ENCODE measurements at regions of chr5 and their contacts with region 1.

Region 1: GRCh38 chr5:137660349-137660817 is 75.5 kb downstream of the KLHL3 start:
- DNase-seq: peak; percentile 85
- H3K4me3 Mint-ChIP-seq: no peak overlapping the region
- H3K27ac Mint-ChIP-seq: no peak overlapping the region
- H3K4me1 Mint-ChIP-seq: no peaks in the 10 kb centered on the region
- H3K27me3 Mint-ChIP-seq: peaks cover 10% of the 10 kb centered on the region
- CTCF ChIP-seq: peak; percentile 80

Region 2: DNA sequence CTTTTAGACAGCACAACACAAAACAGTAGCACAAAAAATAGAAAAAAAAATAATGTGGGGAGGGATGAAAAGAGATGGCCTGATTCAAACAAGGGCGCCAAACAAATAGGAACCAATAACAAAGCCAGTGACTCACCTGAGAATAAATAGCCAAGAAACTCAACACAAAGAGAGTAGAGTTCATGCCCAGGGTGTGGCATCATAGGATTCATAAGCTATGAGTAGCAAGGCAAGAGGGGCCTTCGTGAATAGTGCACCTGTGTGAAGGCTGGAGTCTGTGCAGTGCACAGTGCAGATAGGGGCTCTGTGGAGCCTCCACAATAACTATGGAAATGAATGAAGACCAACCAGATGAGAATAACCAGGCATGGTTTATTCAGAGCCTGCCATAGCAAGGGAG is 703.0 kb before region 1 on chr5:
- CTCF ChIA-PET with region 1: no interaction called
- POLR2A ChIA-PET with region 1: no interaction called
- intact Hi-C with region 1: no loop called
- DNase-seq: peak; percentile 44
- H3K4me3 Mint-ChIP-seq: no peak overlapping the region
- H3K27ac Mint-ChIP-seq: no peak overlapping the region
- H3K4me1 Mint-ChIP-seq: no peaks in the 10 kb centered on the region
- H3K27me3 Mint-ChIP-seq: no peaks in the 10 kb centered on the region
- CTCF ChIP-seq: no peak

Region 3: GRCh38 chr5:137629646-137630045 is 30.7 kb before region 1 on chr5:
- CTCF ChIA-PET with region 1: interaction called, 101 read pairs
- POLR2A ChIA-PET with region 1: interaction called, 4 read pairs
- intact Hi-C with region 1: loop called (anchors 1 kb)
- DNase-seq: peak; percentile 87
- H3K4me3 Mint-ChIP-seq: no peak overlapping the region
- H3K27ac Mint-ChIP-seq: no peak overlapping the region
- H3K4me1 Mint-ChIP-seq: no peaks in the 10 kb centered on the region
- H3K27me3 Mint-ChIP-seq: no peaks in the 10 kb centered on the region
- CTCF ChIP-seq: peak; percentile 99

Region 4: GRCh38 chr5:137649228-137649935 is 11.0 kb before region 1 on chr5:
- CTCF ChIA-PET with region 1: interaction called, 64 read pairs
- POLR2A ChIA-PET with region 1: interaction called, 3 read pairs
- intact Hi-C with region 1: no loop called
- DNase-seq: no peak
- H3K4me3 Mint-ChIP-seq: no peak overlapping the region
- H3K27ac Mint-ChIP-seq: no peak overlapping the region
- H3K4me1 Mint-ChIP-seq: peaks cover 5% of the 10 kb centered on the region
- H3K27me3 Mint-ChIP-seq: no peaks in the 10 kb centered on the region
- CTCF ChIP-seq: no peak

Region 5: DNA sequence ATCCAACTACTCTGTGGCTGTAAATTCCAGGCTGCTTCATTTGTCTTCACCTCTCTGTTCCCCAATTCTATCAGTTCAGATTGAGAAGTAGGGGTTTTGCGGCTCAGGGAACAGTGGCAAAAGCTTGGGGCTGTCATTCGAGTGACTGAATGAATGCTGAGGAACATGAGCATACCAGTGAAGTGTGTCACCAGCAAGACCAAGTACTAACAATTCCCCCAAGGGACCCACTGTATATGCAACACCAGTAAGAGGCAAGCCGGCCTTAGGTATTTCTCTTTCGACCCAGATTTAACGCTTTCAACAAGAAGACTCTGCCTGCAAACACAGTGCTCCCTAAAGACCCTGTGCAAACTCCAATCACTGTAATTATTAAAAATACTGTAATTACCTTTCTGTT is 49.7 kb after region 1 on chr5:
- CTCF ChIA-PET with region 1: interaction called, 11 read pairs
- POLR2A ChIA-PET with region 1: no interaction called
- intact Hi-C with region 1: no loop called
- DNase-seq: no peak
- H3K4me3 Mint-ChIP-seq: no peak overlapping the region
- H3K27ac Mint-ChIP-seq: no peak overlapping the region
- H3K4me1 Mint-ChIP-seq: no peaks in the 10 kb centered on the region
- H3K27me3 Mint-ChIP-seq: no peaks in the 10 kb centered on the region
- CTCF ChIP-seq: no peak

Region 6: GRCh38 chr5:137734962-137735554 is 74.7 kb after region 1 on chr5:
- CTCF ChIA-PET with region 1: interaction called, 236 read pairs
- POLR2A ChIA-PET with region 1: interaction called, 4 read pairs
- intact Hi-C with region 1: no loop called
- DNase-seq: no peak
- H3K4me3 Mint-ChIP-seq: no peak overlapping the region
- H3K27ac Mint-ChIP-seq: no peak overlapping the region
- H3K4me1 Mint-ChIP-seq: peaks cover 4% of the 10 kb centered on the region
- H3K27me3 Mint-ChIP-seq: no peaks in the 10 kb centered on the region
- CTCF ChIP-seq: no peak

Region 7: DNA sequence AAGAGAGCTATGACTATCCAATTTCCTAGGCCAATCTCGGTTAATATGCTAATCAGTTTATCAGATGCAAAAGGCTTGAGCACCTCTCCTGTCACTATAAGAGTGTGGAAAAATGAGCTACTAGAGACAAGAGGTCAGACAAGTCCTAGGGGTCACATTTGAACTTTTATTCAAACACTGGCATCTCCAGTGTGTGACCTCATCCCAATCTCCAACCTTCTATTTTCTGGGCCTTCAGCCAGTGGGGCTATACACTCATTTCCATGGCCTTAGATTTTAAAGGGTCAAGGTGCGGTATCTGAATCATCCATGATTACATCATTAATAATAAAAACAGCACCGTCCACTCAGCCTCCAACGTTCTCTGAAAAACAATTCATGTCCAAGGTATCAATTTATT is 1354.3 kb after region 1 on chr5:
- CTCF ChIA-PET with region 1: no interaction called
- POLR2A ChIA-PET with region 1: no interaction called
- intact Hi-C with region 1: no loop called
- DNase-seq: peak; percentile 94
- H3K4me3 Mint-ChIP-seq: no peak overlapping the region
- H3K27ac Mint-ChIP-seq: no peak overlapping the region
- H3K4me1 Mint-ChIP-seq: peaks cover 22% of the 10 kb centered on the region
- H3K27me3 Mint-ChIP-seq: no peaks in the 10 kb centered on the region
- CTCF ChIP-seq: no peak